Caco-2 (cell line): ENCODE measurements at regions of chr12 and their contacts with region 1.

Region 1: DNA sequence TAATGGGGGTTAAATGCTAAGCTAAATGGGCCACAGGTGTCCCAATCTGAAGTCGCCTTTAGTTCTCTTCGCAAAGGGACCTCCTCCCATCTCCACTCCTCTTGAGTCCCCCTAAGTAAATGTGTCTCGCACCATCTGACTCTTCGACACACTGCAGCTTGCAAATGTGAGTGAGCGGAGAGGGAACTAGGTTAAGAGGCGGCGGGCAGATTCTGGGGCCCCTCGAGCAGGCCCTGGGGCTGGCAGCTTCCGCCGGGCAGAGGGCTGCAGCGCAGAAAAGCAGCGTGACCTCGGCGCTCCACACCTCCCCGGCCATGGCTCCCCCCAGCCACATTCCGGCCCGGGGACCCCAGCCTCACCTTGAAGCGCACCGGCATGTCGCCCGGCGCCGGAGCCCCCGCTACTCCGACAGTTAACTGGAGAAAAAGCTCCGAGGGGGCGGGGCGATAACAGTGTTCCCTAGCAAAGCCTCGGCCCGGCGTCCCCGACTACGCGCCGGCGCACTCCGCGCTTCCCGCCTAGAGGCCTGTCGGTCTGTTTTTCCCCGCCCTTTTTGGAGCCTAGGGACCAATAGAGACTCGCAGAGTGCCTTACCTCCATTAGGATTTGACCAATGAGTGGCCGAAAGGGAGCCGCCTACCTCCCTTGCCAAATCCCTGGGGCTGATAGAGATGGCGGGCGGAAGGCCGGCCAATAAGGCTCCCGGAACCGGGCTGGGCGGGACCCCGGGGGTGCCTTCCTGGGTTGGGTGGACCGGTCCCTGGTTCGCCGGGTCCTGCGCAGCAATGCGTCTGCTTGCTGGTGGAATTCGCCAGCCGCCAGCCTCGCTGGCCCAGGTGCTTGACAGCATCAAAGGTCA is at the start of gene MDM1:
- DNase-seq: peak; percentile 97 to 98
- H3K4me3 ChIP-seq: peak within 1 kb of the TSS; percentile 71
- H3K4me3 Mint-ChIP-seq: peak within 1 kb of the TSS; percentile 79
- H3K27ac Mint-ChIP-seq: peak within 1 kb of the TSS; percentile 51
- H3K4me1 ChIP-seq: peaks cover 22% of the 10 kb centered on the region; the same call in 1 of the 2 replicates
- H3K4me1 Mint-ChIP-seq: peaks cover 8% of the 10 kb centered on the region
- H3K27me3 ChIP-seq: no peaks in the 10 kb centered on the region
- H3K27me3 Mint-ChIP-seq: no peaks in the 10 kb centered on the region
- CTCF ChIP-seq: no peak
- total RNA-seq, gene MDM1: 19.0 and 22.2 TPM in 2 replicates

Region 2: GRCh38 chr12:68344126-68344525 is 12.0 kb after region 1 on chr12:
- CTCF ChIA-PET with region 1: no interaction called
- POLR2A ChIA-PET with region 1: no interaction called
- intact Hi-C with region 1: loop called (anchors 1 kb)
- DNase-seq: peak; percentile 51 to 67
- H3K4me3 ChIP-seq: no peak overlapping the region
- H3K4me3 Mint-ChIP-seq: peak overlapping the region; percentile 1
- H3K27ac Mint-ChIP-seq: peak overlapping the region; percentile 20
- H3K4me1 ChIP-seq: peaks cover 39% of the 10 kb centered on the region
- H3K4me1 Mint-ChIP-seq: peaks cover 48% of the 10 kb centered on the region
- H3K27me3 ChIP-seq: no peaks in the 10 kb centered on the region
- H3K27me3 Mint-ChIP-seq: no peaks in the 10 kb centered on the region
- CTCF ChIP-seq: no peak

Region 3: DNA sequence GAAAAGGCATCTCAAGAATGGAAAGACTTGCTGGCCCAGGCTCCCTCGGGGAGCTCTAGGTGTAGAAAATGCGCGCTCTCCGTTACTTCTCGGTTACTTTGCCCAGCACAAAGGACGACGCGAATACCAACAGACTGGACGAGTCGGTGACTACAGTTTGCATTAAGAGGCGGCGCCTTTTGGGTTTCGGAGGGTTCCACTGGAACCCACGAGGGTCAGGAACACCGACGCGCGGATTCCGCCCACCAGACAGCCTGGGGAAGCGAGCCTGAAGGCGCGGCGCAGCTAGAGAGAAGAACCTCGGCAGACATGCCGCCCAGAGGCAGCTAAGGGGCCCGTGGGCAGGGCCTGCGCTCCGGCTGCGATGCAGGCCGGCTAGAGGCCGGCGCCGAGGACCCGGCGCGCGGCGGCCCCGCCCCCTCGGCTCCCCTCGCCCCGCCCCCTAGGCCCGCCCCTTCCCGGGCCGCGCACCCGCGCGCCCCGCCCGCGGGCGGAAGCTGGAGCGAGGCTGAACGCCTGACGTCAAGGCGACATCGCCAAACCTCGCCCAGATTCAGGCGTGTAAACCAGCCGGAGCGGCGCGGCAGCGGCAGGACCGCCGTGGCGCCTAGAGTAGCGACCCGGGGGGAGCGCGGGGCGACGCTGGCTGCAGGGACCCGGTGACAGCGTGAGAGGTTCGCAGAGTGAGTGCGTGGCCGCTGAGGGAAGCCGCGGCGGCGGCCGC is 278.4 kb after region 1 on chr12 and contains the start of gene RAP1B:
- CTCF ChIA-PET with region 1: no interaction called
- POLR2A ChIA-PET with region 1: no interaction called
- intact Hi-C with region 1: loop called (anchors 2 kb)
- DNase-seq: peak; percentile 91
- H3K4me3 ChIP-seq: peak within 1 kb of the TSS; percentile 92
- H3K4me3 Mint-ChIP-seq: peak within 1 kb of the TSS; percentile 76
- H3K27ac Mint-ChIP-seq: peak within 1 kb of the TSS; percentile 91
- H3K4me1 ChIP-seq: peaks cover 50% of the 10 kb centered on the region
- H3K4me1 Mint-ChIP-seq: peaks cover 29% of the 10 kb centered on the region
- H3K27me3 ChIP-seq: no peaks in the 10 kb centered on the region
- H3K27me3 Mint-ChIP-seq: no peaks in the 10 kb centered on the region
- CTCF ChIP-seq: no peak
- total RNA-seq, gene RAP1B: 216 and 239 TPM in 2 replicates